ENCODE measurements at regions of chr12 and their contacts with region 1.

Region 1: GRCh38 chr12:53251477-53252348 is 16.4 kb upstream of the ESPL1 start:
- DNase-seq: peak; percentile 81 to 90
- ATAC-seq: peak; percentile 90 to 94 (median 91)
- H3K4me3 ChIP-seq: peak overlapping the region; percentile 84
- H3K27ac ChIP-seq: peak overlapping the region; percentile 87
- H3K4me1 ChIP-seq: peaks cover 18% of the 10 kb centered on the region
- H3K27me3 ChIP-seq: no peaks in the 10 kb centered on the region
- CTCF ChIP-seq: peak; percentile 41

Region 2: GRCh38 chr12:53200458-53201176 is 51.1 kb before region 1 on chr12:
- intact Hi-C with region 1: no loop called
- DNase-seq: no peak
- ATAC-seq: no peak
- H3K4me3 ChIP-seq: no peak overlapping the region
- H3K27ac ChIP-seq: no peak overlapping the region
- H3K4me1 ChIP-seq: no peaks in the 10 kb centered on the region
- H3K27me3 ChIP-seq: no peaks in the 10 kb centered on the region
- CTCF ChIP-seq: no peak

Region 3: DNA sequence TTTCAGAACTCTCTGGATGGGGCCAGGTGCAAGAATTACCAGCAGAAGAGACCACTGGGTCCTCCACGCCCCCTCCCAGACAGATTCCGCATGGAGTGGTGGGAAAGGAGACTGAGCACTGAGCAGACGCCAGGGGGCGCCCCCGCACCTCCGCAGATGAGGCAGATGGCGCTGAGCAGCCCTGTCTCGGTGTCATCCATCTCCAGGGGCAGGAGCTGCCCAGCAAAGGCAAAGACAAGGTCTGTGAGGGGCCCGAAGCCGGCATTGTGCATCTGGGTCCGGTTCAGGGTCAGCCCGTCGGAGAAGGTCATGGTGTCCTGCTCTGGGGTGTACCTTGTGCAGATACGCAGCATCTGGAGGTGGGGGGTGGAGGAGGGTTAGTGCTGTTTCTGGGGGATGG is 38.4 kb before region 1 on chr12:
- intact Hi-C with region 1: loop called in 1 of 2 experiments (anchors 1 kb)
- DNase-seq: peak; percentile 86 to 93
- ATAC-seq: peak; percentile 77 to 85 (median 82)
- H3K4me3 ChIP-seq: no peak overlapping the region
- H3K27ac ChIP-seq: no peak overlapping the region
- H3K4me1 ChIP-seq: peaks cover 13% of the 10 kb centered on the region
- H3K27me3 ChIP-seq: no peaks in the 10 kb centered on the region
- CTCF ChIP-seq: peak; percentile 93

Region 4: GRCh38 chr12:53220801-53221202 is 30.9 kb before region 1 on chr12:
- intact Hi-C with region 1: loop called (anchors 1 to 2 kb)
- DNase-seq: peak; percentile 91 to 95
- ATAC-seq: peak; percentile 80 to 86 (median 84)
- H3K4me3 ChIP-seq: peak overlapping the region; percentile 71
- H3K27ac ChIP-seq: peak overlapping the region; percentile 93
- H3K4me1 ChIP-seq: peaks cover 35% of the 10 kb centered on the region
- H3K27me3 ChIP-seq: no peaks in the 10 kb centered on the region
- CTCF ChIP-seq: no peak

Region 5: GRCh38 chr12:53287741-53288216 is 36.1 kb after region 1 on chr12:
- intact Hi-C with region 1: loop called in 1 of 2 experiments (anchors 5 kb)
- DNase-seq: peak; percentile 72 to 85
- ATAC-seq: peak; percentile 80 to 95 (median 83)
- H3K4me3 ChIP-seq: no peak overlapping the region
- H3K27ac ChIP-seq: no peak overlapping the region
- H3K4me1 ChIP-seq: no peaks in the 10 kb centered on the region
- H3K27me3 ChIP-seq: no peaks in the 10 kb centered on the region
- CTCF ChIP-seq: peak; percentile 65

Region 6: DNA sequence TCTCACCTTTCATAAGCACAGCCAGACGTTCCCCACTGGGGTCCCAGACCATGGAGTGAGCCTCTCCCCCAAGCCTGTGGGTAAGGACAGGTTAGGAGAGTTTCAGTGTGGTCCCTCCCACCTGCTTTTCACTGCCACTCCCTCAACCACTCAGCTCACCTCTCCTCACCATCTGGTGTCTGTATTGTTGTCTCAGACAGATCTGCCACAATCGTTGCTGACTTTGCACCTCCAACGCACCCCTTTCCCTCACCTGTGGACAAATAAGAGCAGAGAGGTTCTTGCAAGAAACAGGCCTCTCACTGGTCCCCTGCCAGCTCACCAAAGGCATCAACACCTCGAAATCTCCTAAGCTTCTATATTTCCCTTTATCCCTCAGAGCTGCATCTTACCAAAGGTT is 56.6 kb after region 1 on chr12:
- intact Hi-C with region 1: no loop called
- DNase-seq: no peak
- ATAC-seq: no peak
- H3K4me3 ChIP-seq: no peak overlapping the region
- H3K27ac ChIP-seq: no peak overlapping the region
- H3K4me1 ChIP-seq: no peaks in the 10 kb centered on the region
- H3K27me3 ChIP-seq: no peaks in the 10 kb centered on the region
- CTCF ChIP-seq: no peak

Region 7: GRCh38 chr12:53365245-53365904 is 113.7 kb after region 1 on chr12:
- intact Hi-C with region 1: no loop called
- DNase-seq: no peak
- ATAC-seq: peak in 3 of 4 donors; percentile 39 to 50 (median 40)
- H3K4me3 ChIP-seq: no peak overlapping the region
- H3K27ac ChIP-seq: no peak overlapping the region
- H3K4me1 ChIP-seq: peaks cover 7% of the 10 kb centered on the region
- H3K27me3 ChIP-seq: no peaks in the 10 kb centered on the region
- CTCF ChIP-seq: no peak

Measured in psoas muscle (tissue), 8 donors.